ENCODE measurements at regions of chr15 and their contacts with region 1.

Region 1: GRCh38 chr15:101288908-101289513 is 6.0 kb downstream of the SNRPA1 start:
- DNase-seq: no peak
- H3K4me3 ChIP-seq: no peak overlapping the region
- CTCF ChIP-seq: peak; percentile 29

Region 2: GRCh38 chr15:101115786-101116680 is 173.0 kb before region 1 on chr15:
- CTCF ChIA-PET with region 1: no interaction called
- POLR2A ChIA-PET with region 1: no interaction called
- DNase-seq: no peak
- H3K4me3 ChIP-seq: no peak overlapping the region
- CTCF ChIP-seq: no peak

Region 3: DNA sequence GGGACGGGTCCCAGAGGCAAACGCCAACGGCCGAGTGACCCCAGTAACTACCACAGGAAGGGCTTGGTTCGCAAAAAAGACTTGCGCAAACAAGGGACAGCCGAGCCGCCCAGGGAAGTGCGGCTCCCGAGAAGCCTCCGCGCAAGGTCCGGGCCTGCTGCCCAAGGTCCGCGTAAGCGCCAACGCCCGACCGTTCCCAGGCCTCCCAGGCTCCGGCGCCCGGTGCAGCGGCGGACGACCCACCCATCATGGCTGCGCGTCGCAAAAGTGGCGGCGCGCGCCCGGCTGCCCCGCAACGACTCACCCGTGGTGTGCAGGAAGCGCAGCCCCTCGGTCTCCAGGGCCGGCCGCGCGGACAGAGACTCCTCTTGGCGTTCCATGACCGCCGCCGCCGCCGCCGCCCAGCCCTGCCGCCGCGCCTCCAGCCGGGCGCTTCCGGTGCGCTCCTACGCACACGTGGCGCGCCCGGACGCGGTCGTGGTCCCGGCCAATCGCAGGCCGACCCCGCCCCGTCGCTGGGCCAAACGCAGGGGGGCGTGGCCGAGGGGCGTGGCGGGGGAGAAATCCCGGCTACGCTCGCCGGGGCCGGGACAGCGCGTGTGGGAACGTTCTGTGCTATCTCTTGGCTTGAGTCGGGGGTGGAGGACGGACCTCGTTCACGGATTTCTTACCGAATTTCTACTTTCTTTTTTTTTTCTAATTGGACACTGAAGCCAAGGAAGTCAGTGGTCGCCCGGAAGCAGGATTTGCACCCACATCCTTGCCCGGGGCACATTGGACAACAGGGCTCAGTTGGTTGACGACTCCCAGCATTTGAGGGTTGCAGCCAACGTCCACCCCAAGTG is 11.8 kb before region 1 on chr15 and contains the start of gene SELENOS:
- CTCF ChIA-PET with region 1: interaction called, 33 read pairs
- POLR2A ChIA-PET with region 1: no interaction called
- DNase-seq: no peak
- H3K4me3 ChIP-seq: peak within 1 kb of the TSS; percentile 95
- CTCF ChIP-seq: no peak

Region 4: GRCh38 chr15:101307048-101307896 is 18.3 kb after region 1 on chr15:
- CTCF ChIA-PET with region 1: no interaction called
- POLR2A ChIA-PET with region 1: no interaction called
- DNase-seq: no peak
- H3K4me3 ChIP-seq: no peak overlapping the region
- CTCF ChIP-seq: no peak

Region 5: GRCh38 chr15:101358895-101359294 is 69.9 kb after region 1 on chr15:
- CTCF ChIA-PET with region 1: no interaction called
- POLR2A ChIA-PET with region 1: no interaction called
- DNase-seq: peak; percentile 9
- H3K4me3 ChIP-seq: no peak overlapping the region
- CTCF ChIP-seq: no peak

Region 6: DNA sequence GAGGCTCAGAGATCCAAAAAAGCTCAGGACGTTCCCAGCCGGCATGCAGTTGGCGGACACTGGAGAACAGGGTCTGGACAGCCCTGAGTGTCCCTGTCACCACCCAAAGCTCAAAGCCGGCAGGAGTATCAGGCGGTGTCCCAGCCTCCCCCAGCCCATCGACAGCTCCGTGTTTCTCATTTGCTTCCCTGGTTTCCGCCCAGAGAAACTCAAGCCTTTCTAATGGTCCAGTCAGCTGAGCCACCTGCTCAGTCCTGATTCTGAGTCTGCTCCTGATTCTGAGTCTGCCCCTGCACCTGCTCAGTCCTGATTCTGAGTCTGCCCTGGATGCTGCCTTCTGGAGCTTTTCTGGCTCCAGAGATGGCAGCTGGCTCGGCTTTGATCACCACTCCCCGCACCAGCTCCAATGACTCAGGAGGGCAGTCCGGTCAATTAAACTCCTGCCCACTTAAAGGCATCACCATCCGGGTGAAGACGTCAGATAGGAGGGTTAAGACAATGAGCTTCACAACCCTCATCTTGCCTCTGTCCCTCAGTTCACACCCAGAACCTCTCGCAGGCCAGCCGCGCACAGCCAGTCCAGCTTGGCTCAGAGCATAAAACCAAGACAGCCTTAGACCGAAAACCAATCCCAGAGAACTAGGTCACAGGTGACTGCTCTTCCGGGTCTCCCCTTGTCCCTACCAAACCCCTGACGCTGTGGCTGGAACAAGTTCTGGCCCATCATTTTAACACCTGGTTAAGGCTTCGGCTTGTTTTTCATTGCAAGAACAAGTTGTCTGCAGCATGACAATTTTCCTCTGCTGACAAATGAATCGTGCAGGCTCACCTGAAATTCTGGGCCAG is 193.7 kb after region 1 on chr15:
- CTCF ChIA-PET with region 1: no interaction called
- POLR2A ChIA-PET with region 1: no interaction called
- DNase-seq: no peak
- H3K4me3 ChIP-seq: no peak overlapping the region
- CTCF ChIP-seq: no peak

Region 7: DNA sequence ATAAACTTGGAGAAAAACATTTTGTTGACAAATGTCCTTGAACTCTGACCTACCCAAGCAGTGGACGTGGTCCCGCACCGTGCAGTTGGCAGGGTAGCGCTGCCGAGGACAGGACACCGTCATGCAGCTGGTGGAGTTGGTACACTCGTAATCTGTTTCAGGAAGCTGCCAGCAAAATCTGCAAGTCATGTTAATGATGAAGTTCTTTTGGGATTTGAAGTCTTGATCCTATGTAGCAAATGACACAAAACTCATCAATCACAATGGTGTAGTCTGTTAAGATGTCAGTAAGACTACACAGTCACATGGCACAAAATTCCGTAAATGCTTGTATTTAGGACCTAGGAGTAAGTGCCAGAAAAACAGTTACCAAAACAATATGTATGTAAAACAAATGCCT is 357.7 kb after region 1 on chr15:
- CTCF ChIA-PET with region 1: interaction called, 353 read pairs
- POLR2A ChIA-PET with region 1: no interaction called
- DNase-seq: no peak
- H3K4me3 ChIP-seq: no peak overlapping the region
- CTCF ChIP-seq: no peak

Measured in AG04449 (cell line).